Dendritic cell treated with granulocyte-macrophage colony-stimulating factor and Interleukin-4, amounts not matched to agents 40 ng/mL and 50 ng/mL, for 4 days (primary cell): ENCODE measurements at regions of chr22 and their contacts with region 1.

Region 1: GRCh38 chr22:28594797-28595462 is 84.7 kb downstream of the TTC28 start:
- H3K4me3 Mint-ChIP-seq: no peak overlapping the region
- H3K27ac Mint-ChIP-seq: no peak overlapping the region
- H3K4me1 Mint-ChIP-seq: no peaks in the 10 kb centered on the region
- H3K27me3 Mint-ChIP-seq: no peaks in the 10 kb centered on the region

Region 2: DNA sequence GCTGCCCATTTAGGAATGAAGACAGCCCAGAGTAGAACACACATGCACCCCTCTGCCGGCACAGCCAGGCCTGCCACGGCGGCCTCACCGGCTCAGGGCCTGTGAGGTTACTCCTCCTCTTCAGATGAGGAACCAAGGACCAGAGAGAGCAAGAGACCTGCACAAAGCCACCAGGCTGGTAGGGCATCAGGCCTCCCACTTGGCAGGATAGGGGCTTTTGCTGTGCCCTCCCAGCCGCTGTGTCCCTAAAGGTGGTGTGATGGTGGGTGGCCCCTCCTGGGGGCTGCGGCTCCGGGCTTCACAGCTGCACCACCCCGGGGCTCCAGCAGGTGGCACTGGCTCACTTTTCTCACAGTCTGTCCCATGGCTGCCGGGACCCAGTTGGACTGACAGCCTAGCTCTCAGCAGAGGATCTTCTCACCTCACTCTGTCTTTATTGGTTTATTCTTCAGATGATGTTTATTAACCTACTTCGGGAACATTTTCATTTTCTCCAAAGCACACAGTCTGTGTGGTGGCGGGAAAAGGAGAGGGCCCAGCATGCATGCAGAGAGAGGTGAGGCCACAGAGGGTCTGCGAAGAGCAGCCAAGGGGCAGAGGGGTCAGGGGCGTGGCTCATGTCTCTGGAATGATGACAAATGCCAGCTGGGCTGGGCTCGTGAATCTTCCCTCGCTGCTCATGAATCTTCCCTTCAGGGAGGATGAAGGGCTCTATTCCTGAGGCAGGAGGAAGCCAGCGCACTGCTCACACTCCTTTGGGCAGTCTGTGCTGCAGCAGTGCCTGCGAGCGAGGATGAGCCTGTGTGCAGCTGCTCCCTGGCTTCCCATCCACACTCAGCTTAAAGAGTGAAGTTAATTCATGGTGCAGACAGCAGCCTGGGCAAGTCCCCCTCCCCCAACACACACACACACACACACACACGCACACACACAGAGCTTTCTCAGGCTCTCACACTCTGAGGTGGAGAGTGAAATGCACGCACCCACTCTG is 574.8 kb before region 1 on chr22:
- intact Hi-C with region 1: loop called (anchors 1 kb)
- H3K4me3 Mint-ChIP-seq: no peak overlapping the region
- H3K27ac Mint-ChIP-seq: no peak overlapping the region
- H3K4me1 Mint-ChIP-seq: no peaks in the 10 kb centered on the region
- H3K27me3 Mint-ChIP-seq: no peaks in the 10 kb centered on the region

Region 3: GRCh38 chr22:28051787-28052356 is 543.1 kb before region 1 on chr22:
- intact Hi-C with region 1: loop called (anchors 1 kb)
- H3K4me3 Mint-ChIP-seq: no peak overlapping the region
- H3K27ac Mint-ChIP-seq: no peak overlapping the region
- H3K4me1 Mint-ChIP-seq: no peaks in the 10 kb centered on the region
- H3K27me3 Mint-ChIP-seq: no peaks in the 10 kb centered on the region

Region 4: DNA sequence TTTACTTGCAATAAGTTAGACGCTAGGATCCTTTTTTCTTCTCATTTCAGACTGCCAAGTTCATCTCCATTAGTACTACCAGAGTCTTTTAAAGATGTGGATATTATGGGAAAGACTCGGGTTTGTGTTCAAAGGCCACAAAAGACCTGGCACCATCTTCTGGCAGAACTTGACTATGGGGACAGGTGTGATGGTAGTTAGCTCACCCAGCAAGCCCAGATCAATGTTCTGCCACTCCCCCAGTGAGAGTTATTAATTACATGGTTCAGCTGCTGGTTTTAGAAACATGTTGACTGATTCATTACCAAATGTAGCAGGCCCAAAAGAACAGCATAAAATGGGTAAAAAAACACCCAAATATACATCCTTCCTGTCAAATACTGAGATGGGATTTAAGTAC is 342.4 kb before region 1 on chr22:
- intact Hi-C with region 1: loop called (anchors 10 kb)
- H3K4me3 Mint-ChIP-seq: no peak overlapping the region
- H3K27ac Mint-ChIP-seq: no peak overlapping the region
- H3K4me1 Mint-ChIP-seq: no peaks in the 10 kb centered on the region
- H3K27me3 Mint-ChIP-seq: no peaks in the 10 kb centered on the region

Region 5: DNA sequence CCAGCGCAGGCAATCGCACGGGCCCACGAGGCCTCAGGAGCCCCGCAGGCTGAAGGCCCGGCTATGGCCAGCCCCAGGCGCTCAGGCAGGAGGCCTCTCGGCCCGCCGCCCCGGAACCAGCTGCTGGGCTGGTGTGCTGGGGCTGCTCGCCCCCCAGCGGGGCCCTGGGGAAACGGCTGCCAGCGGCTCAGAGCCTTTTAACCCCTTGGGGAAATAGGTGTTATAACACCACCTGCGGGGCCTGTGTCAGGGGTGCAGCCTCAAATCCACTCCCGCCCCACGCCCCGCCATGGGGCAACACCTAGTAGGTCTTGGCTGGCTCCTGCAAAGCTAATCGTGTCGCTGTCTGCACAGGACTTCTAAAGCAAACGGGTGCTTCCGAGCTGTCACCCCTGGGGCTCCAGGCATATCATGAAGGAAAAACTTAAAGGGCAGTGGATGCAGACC is 152.6 kb before region 1 on chr22:
- intact Hi-C with region 1: loop called (anchors 5 kb)
- H3K4me3 Mint-ChIP-seq: peak overlapping the region; percentile 81
- H3K27ac Mint-ChIP-seq: peak overlapping the region; percentile 57
- H3K4me1 Mint-ChIP-seq: peaks cover 24% of the 10 kb centered on the region
- H3K27me3 Mint-ChIP-seq: peaks cover 13% of the 10 kb centered on the region

Region 6: GRCh38 chr22:28656181-28656580 is 61.3 kb after region 1 on chr22:
- intact Hi-C with region 1: no loop called
- H3K4me3 Mint-ChIP-seq: no peak overlapping the region
- H3K27ac Mint-ChIP-seq: no peak overlapping the region
- H3K4me1 Mint-ChIP-seq: no peaks in the 10 kb centered on the region
- H3K27me3 Mint-ChIP-seq: peaks cover 11% of the 10 kb centered on the region